Calu3 (cell line): ENCODE measurements at regions of chr12 and their contacts with region 1.

Region 1: DNA sequence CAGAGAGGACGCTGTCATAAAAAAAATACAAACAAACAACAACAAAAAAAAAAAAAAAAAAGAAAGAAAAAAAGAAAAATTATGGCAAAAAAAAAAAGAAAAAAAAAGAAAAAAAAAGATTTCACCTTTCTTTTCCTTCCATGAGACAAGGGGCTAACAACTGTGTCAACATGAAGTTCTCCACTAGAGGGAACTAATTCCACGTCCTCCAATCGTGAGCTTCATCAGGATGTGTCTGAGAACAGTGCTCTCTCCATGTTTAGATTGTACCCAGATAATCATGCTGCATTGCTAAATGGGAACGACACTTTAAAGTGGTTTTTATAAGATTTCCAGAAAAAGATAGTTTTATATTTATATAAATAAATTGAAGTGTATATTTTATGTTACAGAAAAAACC is 96.2 kb upstream of the PTPRB start:
- DNase-seq: peak; percentile 48
- H3K4me3 Mint-ChIP-seq: no peak overlapping the region
- H3K27ac Mint-ChIP-seq: no peak overlapping the region
- H3K4me1 Mint-ChIP-seq: peaks cover 10% of the 10 kb centered on the region
- H3K27me3 Mint-ChIP-seq: no peaks in the 10 kb centered on the region
- CTCF ChIP-seq: peak; percentile 57

Region 2: DNA sequence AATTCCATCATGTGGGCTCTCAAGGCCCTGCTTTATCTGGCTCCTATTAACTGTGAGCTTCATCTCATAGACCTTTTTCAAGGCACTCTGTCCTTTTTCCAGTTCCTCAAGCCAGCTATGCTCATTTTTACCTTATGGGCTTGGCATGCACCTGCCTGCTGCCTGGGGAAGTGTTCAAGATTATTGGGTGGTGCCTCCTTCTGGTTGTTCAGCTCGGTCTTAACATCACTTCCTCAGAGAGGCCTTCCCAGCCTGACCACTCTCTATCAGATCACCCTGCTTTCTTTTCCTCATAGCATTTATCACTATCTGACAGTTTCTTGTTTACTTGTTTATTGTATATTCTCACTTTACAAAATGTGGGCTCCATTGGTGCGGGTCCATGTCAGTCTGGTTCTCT is 45.9 kb after region 1 on chr12:
- CTCF ChIA-PET with region 1: interaction called, 10 read pairs
- intact Hi-C with region 1: no loop called
- DNase-seq: no peak
- H3K4me3 Mint-ChIP-seq: no peak overlapping the region
- H3K27ac Mint-ChIP-seq: no peak overlapping the region
- H3K4me1 Mint-ChIP-seq: no peaks in the 10 kb centered on the region
- H3K27me3 Mint-ChIP-seq: no peaks in the 10 kb centered on the region
- CTCF ChIP-seq: no peak

Region 3: DNA sequence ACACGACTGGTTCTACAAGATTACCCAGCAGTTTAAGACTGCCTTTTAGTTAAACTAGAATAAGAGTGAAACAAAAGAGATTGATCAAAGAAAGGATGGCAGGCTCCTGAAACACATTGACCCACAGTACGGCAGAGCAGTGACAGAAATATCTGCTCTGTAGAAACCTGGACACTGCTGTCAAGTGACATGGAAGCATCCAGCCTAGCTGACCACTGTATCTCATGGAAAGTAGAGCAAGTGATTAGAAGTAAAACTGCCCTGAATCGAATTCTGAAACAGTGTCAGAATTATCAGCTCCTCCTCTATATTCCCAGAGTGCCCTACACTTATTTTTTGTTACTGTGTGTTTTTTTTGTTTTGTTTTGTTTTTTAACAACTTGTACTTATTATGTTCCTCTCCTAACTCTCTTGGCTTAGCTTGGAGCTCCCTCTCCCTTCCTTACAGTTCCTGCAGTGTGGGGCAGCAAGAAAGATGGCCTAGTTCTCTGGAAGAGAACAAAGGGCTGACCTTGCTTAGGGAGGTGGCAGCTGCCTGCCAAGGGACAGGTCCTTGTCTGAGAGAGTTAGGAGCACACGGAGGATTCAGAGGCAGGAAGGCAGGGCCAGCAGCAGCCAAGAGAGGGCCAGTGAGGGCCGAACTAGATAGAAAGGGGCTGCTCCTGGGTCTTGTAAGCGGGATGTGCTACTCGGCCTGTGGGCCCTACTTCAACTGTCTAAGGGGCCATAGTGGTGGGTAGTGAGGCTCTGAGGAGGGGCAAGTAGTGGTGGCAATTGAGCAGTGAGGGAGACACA is 90.0 kb after region 1 on chr12:
- CTCF ChIA-PET with region 1: interaction called, 23 read pairs
- intact Hi-C with region 1: loop called (anchors 1 kb)
- DNase-seq: peak; percentile 42
- H3K4me3 Mint-ChIP-seq: no peak overlapping the region
- H3K27ac Mint-ChIP-seq: peak overlapping the region; percentile 0
- H3K4me1 Mint-ChIP-seq: peaks cover 22% of the 10 kb centered on the region
- H3K27me3 Mint-ChIP-seq: no peaks in the 10 kb centered on the region
- CTCF ChIP-seq: peak; percentile 17

Region 4: GRCh38 chr12:70849265-70849960 is 116.0 kb after region 1 on chr12:
- CTCF ChIA-PET with region 1: interaction called, 21 read pairs
- intact Hi-C with region 1: loop called (anchors 1 kb)
- DNase-seq: no peak
- H3K4me3 Mint-ChIP-seq: no peak overlapping the region
- H3K27ac Mint-ChIP-seq: no peak overlapping the region
- H3K4me1 Mint-ChIP-seq: no peaks in the 10 kb centered on the region
- H3K27me3 Mint-ChIP-seq: no peaks in the 10 kb centered on the region
- CTCF ChIP-seq: peak; percentile 49